Panc1 (cell line): ENCODE measurements at regions of chr10 and their contacts with region 1.

Region 1: GRCh38 chr10:101840741-101841453 is 2.7 kb downstream of the KCNIP2 start:
- DNase-seq: no peak
- ATAC-seq: peak; percentile 89
- H3K4me3 ChIP-seq: peak overlapping the region in 1 of 2 experiments; percentile 41; a peak in 1 of 4 replicates
- H3K27ac ChIP-seq: no peak overlapping the region
- H3K4me1 ChIP-seq: peaks cover 5% of the 10 kb centered on the region; the same call in 1 of the 2 replicates
- H3K27me3 ChIP-seq: no peaks in the 10 kb centered on the region
- CTCF ChIP-seq: peak; percentile 99

Region 2: DNA sequence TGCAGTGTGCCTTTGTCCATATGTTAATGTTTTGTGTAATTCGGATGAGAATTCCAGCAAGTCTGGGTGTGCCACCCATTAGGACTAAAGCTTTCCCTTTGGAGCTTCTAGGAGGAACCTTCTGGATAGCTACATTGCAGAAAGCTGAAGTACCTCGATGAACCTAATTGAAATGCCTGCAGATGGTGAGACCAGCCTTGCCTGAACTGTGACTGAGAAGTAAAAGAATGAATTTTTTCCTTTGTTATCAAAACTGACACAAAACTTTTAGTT is 114.8 kb before region 1 on chr10:
- CTCF ChIA-PET with region 1: no interaction called
- POLR2A ChIA-PET with region 1: no interaction called
- in situ Hi-C with region 1: no loop called
- intact Hi-C with region 1: no loop called
- DNase-seq: no peak
- ATAC-seq: no peak
- H3K4me3 ChIP-seq: no peak overlapping the region
- H3K27ac ChIP-seq: no peak overlapping the region
- H3K4me1 ChIP-seq: no peaks in the 10 kb centered on the region
- H3K27me3 ChIP-seq: no peaks in the 10 kb centered on the region
- CTCF ChIP-seq: no peak

Region 3: GRCh38 chr10:101889256-101890210 is 48.6 kb after region 1 on chr10:
- CTCF ChIA-PET with region 1: interaction called, 9 read pairs
- POLR2A ChIA-PET with region 1: no interaction called
- in situ Hi-C with region 1: no loop called
- intact Hi-C with region 1: loop called (anchors 2 kb)
- DNase-seq: peak; percentile 53
- ATAC-seq: peak; percentile 94
- H3K4me3 ChIP-seq: no peak overlapping the region
- H3K27ac ChIP-seq: no peak overlapping the region
- H3K4me1 ChIP-seq: no peaks in the 10 kb centered on the region; the same call in 1 of the 2 replicates
- H3K27me3 ChIP-seq: no peaks in the 10 kb centered on the region
- CTCF ChIP-seq: peak; percentile 96

Region 4: GRCh38 chr10:101986625-101986973 is 145.7 kb after region 1 on chr10:
- CTCF ChIA-PET with region 1: interaction called, 12 read pairs
- POLR2A ChIA-PET with region 1: no interaction called
- in situ Hi-C with region 1: no loop called
- intact Hi-C with region 1: no loop called
- DNase-seq: no peak
- ATAC-seq: no peak
- H3K4me3 ChIP-seq: no peak overlapping the region
- H3K27ac ChIP-seq: no peak overlapping the region
- H3K4me1 ChIP-seq: no peaks in the 10 kb centered on the region
- H3K27me3 ChIP-seq: no peaks in the 10 kb centered on the region
- CTCF ChIP-seq: no peak

Region 5: GRCh38 chr10:102072673-102073527 is 232.0 kb after region 1 on chr10:
- CTCF ChIA-PET with region 1: interaction called, 6 read pairs
- POLR2A ChIA-PET with region 1: no interaction called
- in situ Hi-C with region 1: no loop called
- intact Hi-C with region 1: loop called (anchors 2 kb)
- DNase-seq: peak; percentile 76
- ATAC-seq: peak; percentile 93
- H3K4me3 ChIP-seq: no peak overlapping the region
- H3K27ac ChIP-seq: no peak overlapping the region
- H3K4me1 ChIP-seq: no peaks in the 10 kb centered on the region
- H3K27me3 ChIP-seq: no peaks in the 10 kb centered on the region
- CTCF ChIP-seq: peak; percentile 98

Region 6: GRCh38 chr10:102132563-102133372 is 291.9 kb after region 1 on chr10 and contains the start of gene PPRC1:
- CTCF ChIA-PET with region 1: no interaction called
- POLR2A ChIA-PET with region 1: no interaction called
- in situ Hi-C with region 1: no loop called
- intact Hi-C with region 1: no loop called
- DNase-seq: peak; percentile 98
- ATAC-seq: peak; percentile 97
- H3K4me3 ChIP-seq: peak within 1 kb of the TSS; percentile 91 to 99
- H3K27ac ChIP-seq: peak within 1 kb of the TSS; percentile 96
- H3K4me1 ChIP-seq: peaks cover 32% of the 10 kb centered on the region
- H3K27me3 ChIP-seq: no peaks in the 10 kb centered on the region
- CTCF ChIP-seq: peak; percentile 96
- total RNA-seq, gene PPRC1: 87.9 TPM